Right cardiac atrium (tissue), 5 donors: ENCODE measurements at regions of chr5 and their contacts with region 1.

Region 1: GRCh38 chr5:24642022-24642421 is 2.8 kb downstream of the CDH10 start:
- DNase-seq: no peak
- ATAC-seq: no peak
- H3K4me3 ChIP-seq: no peak overlapping the region
- H3K27ac ChIP-seq: no peak overlapping the region
- H3K4me1 ChIP-seq: no peaks in the 10 kb centered on the region
- H3K27me3 ChIP-seq: no peaks in the 10 kb centered on the region

Region 2: DNA sequence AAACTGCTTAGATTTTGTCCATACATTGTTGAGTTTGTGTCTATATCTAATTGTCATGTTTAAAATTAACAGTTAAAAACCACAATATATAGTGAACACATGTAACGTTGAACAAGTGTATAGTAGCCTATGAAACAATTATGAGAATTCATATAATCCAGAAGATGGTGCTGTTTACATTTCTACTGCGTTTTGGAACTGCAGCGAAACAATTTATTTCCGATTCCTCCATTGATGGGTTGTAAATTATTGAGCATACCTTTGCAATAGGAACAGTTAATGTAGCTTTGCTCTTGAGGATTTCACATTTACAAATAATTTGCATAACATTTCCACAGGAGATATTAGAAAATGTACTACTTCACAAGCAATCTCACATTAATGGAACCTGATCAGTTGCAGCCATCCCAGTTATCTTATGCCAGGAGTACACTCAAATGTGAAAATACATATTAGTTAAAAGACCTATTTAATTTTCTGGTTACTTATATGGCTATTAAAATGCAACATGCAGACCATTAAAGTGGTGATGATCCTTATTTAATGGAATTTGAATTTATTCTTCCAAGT is 409.0 kb before region 1 on chr5:
- intact Hi-C with region 1: loop called in 1 of 4 experiments (anchors 10 kb)
- DNase-seq: no peak
- ATAC-seq: no peak
- H3K4me3 ChIP-seq: no peak overlapping the region
- H3K27ac ChIP-seq: no peak overlapping the region
- H3K4me1 ChIP-seq: no peaks in the 10 kb centered on the region
- H3K27me3 ChIP-seq: no peaks in the 10 kb centered on the region

Region 3: DNA sequence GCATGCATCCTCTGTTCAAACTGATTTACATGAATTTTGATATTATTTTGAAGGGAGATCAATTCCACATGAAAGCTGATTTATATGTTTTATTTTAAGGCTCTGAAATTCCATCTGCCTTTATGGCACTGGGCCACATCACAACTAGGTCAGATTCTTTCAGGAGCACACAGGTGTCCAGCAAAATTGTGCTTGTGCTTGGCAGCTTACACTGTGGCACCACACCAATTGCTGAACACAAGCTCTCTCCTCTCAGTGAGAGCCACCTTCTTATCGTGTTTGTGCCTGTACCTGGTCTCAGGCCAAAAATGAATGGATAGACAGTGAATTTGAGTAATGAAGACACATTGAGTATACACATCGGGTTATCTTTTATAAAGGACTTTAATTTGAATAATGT is 197.6 kb before region 1 on chr5:
- intact Hi-C with region 1: loop called in 2 of 4 experiments (anchors 5 to 10 kb)
- DNase-seq: peak in 1 of 3 donors; percentile 49
- ATAC-seq: peak; percentile 55 to 90
- H3K4me3 ChIP-seq: no peak overlapping the region
- H3K27ac ChIP-seq: no peak overlapping the region
- H3K4me1 ChIP-seq: no peaks in the 10 kb centered on the region
- H3K27me3 ChIP-seq: no peaks in the 10 kb centered on the region

Region 4: DNA sequence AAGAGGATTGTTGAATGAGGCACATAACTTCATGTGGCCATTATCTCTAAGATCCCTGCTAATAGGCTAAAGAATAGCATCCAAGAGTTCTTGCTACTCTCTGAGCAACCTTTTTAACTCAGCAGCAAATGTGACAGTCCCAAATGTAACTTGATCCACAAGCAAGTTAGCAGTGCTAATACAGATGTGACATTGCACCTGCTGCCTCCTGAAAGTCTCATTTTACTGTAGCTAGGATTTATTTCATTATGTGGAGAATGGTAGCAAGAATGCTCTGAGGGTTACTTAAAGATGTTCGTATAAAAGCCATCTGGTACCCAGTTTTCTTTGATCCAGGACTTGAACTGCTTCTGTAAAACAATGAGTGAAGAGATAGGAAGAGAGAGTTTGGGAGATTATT is 43.1 kb before region 1 on chr5:
- intact Hi-C with region 1: no loop called
- DNase-seq: no peak
- ATAC-seq: no peak
- H3K4me3 ChIP-seq: no peak overlapping the region
- H3K27ac ChIP-seq: no peak overlapping the region
- H3K4me1 ChIP-seq: no peaks in the 10 kb centered on the region
- H3K27me3 ChIP-seq: no peaks in the 10 kb centered on the region